WTC11 (cell line): ENCODE measurements at regions of chr6 and their contacts with region 1.

Region 1: DNA sequence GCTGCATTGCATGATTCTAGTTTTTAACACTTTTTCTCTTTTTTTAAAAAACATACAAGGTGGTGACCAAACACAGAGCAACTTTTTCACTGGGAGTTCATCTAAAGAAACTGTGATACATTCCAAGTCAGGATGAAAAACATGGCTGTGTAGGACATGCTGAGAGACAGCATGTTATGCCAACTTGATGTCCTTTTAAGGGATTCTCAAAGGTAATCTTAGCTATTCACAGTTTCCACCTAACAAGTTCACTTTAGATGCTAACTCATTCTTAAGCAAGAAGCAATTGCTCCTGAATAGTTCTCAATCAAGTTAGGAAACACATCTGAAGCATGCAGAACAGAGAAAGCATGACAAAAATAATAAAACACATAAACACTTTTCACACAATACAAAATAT is 3.3 kb downstream of the ASCC3 start:
- DNase-seq: no peak
- ATAC-seq: no peak
- H3K4me3 Mint-ChIP-seq: peak overlapping the region; percentile 50
- H3K27ac Mint-ChIP-seq: peak overlapping the region; percentile 94
- H3K4me1 Mint-ChIP-seq: peaks cover 73% of the 10 kb centered on the region
- H3K27me3 Mint-ChIP-seq: no peaks in the 10 kb centered on the region; the same call in 1 of the 2 replicates
- CTCF ChIP-seq: no peak

Region 2: DNA sequence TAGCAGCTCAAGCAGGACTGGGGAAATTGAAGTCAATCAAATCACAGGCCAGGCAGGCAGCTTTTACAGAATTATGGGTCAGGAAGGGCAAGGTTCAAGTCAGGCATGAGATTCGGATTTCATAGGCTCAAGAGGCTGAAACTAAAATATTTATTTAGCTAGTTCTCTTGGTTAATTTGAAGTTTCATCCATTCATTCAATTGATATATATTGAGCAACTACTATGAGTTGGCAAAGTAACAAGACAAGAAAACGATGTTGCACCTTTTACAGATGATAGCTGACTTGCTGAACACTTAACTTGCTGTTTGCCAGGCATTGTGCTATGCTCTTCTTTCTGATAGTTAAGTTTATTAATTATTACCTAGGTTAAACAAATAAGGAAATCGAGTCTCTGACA is 23.7 kb after region 1 on chr6:
- CTCF ChIA-PET with region 1: no interaction called
- POLR2A ChIA-PET with region 1: interaction called, 12 read pairs
- DNase-seq: no peak
- ATAC-seq: no peak
- H3K4me3 Mint-ChIP-seq: no peak overlapping the region
- H3K27ac Mint-ChIP-seq: no peak overlapping the region
- H3K4me1 Mint-ChIP-seq: peaks cover 13% of the 10 kb centered on the region
- H3K27me3 Mint-ChIP-seq: peaks cover 4% of the 10 kb centered on the region; the same call in 1 of the 2 replicates
- CTCF ChIP-seq: no peak

Region 3: DNA sequence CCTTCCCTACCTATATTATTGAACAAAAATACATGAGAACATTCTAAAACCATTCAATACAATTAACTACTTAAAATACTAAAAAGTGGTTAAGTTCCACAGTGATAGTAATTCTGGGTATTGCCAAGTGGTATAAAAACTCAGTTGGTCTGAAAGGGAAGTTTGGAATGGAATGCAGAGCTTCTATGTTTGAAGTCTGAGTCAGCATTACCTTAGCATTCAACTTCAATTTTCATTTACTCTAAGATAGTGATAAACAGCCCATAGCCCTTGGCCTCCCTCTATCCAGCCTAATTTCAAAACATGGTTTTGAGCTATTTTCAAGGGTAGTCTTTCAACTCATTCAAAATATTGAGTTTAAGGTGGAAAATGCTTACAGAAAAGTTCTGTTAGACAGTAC is 143.7 kb after region 1 on chr6:
- CTCF ChIA-PET with region 1: no interaction called
- POLR2A ChIA-PET with region 1: no interaction called
- DNase-seq: no peak
- ATAC-seq: no peak
- H3K4me3 Mint-ChIP-seq: no peak overlapping the region
- H3K27ac Mint-ChIP-seq: no peak overlapping the region
- H3K4me1 Mint-ChIP-seq: no peaks in the 10 kb centered on the region
- H3K27me3 Mint-ChIP-seq: no peaks in the 10 kb centered on the region
- CTCF ChIP-seq: no peak